ENCODE measurements at regions of chr3 and their contacts with region 1.

Region 1: DNA sequence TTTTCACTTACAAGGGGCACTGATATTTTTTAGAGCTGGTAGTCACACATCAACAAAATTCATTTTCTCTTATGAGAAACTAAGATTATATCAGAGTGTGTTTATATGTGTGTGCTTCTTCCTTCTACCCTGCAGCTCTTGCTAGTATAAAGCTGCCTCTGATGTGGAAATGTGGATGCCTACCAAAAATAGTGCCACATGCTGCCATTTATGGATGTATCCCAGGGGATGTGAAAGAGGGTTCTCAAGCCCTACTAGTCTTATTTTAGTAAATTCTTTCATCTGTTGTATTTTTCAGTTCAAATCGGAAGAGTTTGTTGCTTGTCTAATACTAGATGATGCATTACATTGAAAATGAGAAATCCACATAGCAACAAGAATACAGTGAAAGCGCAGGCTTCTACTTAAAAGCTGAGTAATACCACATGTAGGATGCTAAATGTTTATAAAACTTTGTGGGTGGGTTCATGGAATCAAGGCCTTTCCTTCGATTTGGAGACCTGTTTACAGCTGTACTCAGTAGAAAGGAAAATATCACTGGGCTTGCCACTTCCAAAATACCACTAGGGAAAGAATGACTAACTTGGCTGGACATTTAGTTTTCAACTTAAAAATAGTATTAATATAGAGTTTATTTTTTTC is 399.2 kb downstream of the EPHA3 start:
- DNase-seq: no peak
- ATAC-seq: no peak
- H3K4me3 ChIP-seq: no peak overlapping the region
- H3K27ac ChIP-seq: no peak overlapping the region
- H3K4me1 ChIP-seq: 0 out of 2 replicates have a peak, but pooled peaks cover 8% of the 10 kb centered on the region
- H3K27me3 ChIP-seq: no peaks in the 10 kb centered on the region
- CTCF ChIP-seq: no peak

Region 2: DNA sequence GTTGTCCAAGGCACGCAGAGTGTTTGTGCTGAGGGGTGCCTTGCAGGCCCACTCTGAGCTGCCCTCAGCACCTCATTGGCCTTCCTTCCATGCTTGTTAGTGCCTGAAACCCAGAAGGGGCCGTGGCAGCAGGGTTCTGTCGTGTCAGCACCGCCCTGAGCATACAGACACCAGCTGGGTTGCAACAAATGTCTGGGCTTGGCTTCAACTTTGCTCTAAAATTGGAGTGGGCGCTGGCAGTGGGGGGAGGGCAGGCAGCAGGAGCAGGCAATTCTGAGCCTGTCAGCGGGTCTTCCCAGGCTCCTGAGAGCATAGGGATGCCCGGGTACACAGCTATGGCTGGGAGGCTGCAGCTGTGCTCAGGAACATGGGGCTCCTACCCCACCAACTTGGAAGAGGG is 65.1 kb after region 1 on chr3:
- CTCF ChIA-PET with region 1: no interaction called
- POLR2A ChIA-PET with region 1: no interaction called
- intact Hi-C with region 1: no loop called
- DNase-seq: no peak
- ATAC-seq: no peak
- H3K4me3 ChIP-seq: no peak overlapping the region
- H3K27ac ChIP-seq: no peak overlapping the region
- H3K4me1 ChIP-seq: peaks cover 12% of the 10 kb centered on the region
- H3K27me3 ChIP-seq: no peaks in the 10 kb centered on the region
- CTCF ChIP-seq: no peak

Region 3: GRCh38 chr3:89622063-89622700 is 115.6 kb after region 1 on chr3:
- CTCF ChIA-PET with region 1: interaction called, 11 read pairs
- POLR2A ChIA-PET with region 1: no interaction called
- intact Hi-C with region 1: no loop called
- DNase-seq: no peak
- ATAC-seq: no peak
- H3K4me3 ChIP-seq: no peak overlapping the region
- H3K27ac ChIP-seq: no peak overlapping the region
- H3K4me1 ChIP-seq: no peaks in the 10 kb centered on the region
- H3K27me3 ChIP-seq: peaks cover 48% of the 10 kb centered on the region
- CTCF ChIP-seq: no peak

Region 4: GRCh38 chr3:89635137-89635536 is 128.6 kb after region 1 on chr3:
- CTCF ChIA-PET with region 1: no interaction called
- POLR2A ChIA-PET with region 1: no interaction called
- intact Hi-C with region 1: no loop called
- DNase-seq: no peak
- ATAC-seq: no peak
- H3K4me3 ChIP-seq: no peak overlapping the region
- H3K27ac ChIP-seq: no peak overlapping the region
- H3K4me1 ChIP-seq: no peaks in the 10 kb centered on the region
- H3K27me3 ChIP-seq: 0 out of 2 replicates have a peak, but pooled peaks cover 4% of the 10 kb centered on the region
- CTCF ChIP-seq: no peak

Measured in PC-3 (cell line).